Activated CD8-positive, alpha-beta T cell treated with anti-CD3 and anti-CD28 coated beads for 36 hours (primary cell): ENCODE measurements at regions of chr2 and their contacts with region 1.

Region 1: GRCh38 chr2:190382851-190383250 is 25.3 kb upstream of the MFSD6 start:
- DNase-seq: peak; percentile 37
- ATAC-seq: peak; percentile 80
- H3K4me3 Mint-ChIP-seq: no peak overlapping the region
- H3K27ac Mint-ChIP-seq: no peak overlapping the region
- H3K4me1 Mint-ChIP-seq: peaks cover 5% of the 10 kb centered on the region
- H3K27me3 Mint-ChIP-seq: no peaks in the 10 kb centered on the region
- CTCF ChIP-seq: peak; percentile 62

Region 2: GRCh38 chr2:190804182-190804795 is 421.4 kb after region 1 on chr2:
- CTCF ChIA-PET with region 1: interaction called, 5 read pairs
- POLR2A ChIA-PET with region 1: no interaction called
- intact Hi-C with region 1: loop called (anchors 2 kb)
- DNase-seq: peak; percentile 29
- ATAC-seq: no peak
- H3K4me3 Mint-ChIP-seq: no peak overlapping the region
- H3K27ac Mint-ChIP-seq: no peak overlapping the region
- H3K4me1 Mint-ChIP-seq: peaks cover 12% of the 10 kb centered on the region
- H3K27me3 Mint-ChIP-seq: no peaks in the 10 kb centered on the region
- CTCF ChIP-seq: peak; percentile 77